Caco-2 (cell line): ENCODE measurements at regions of chr6 and their contacts with region 1.

Region 1: GRCh38 chr6:35452186-35453090 is at the start of gene FANCE:
- DNase-seq: peak; percentile 96 to 98
- H3K4me3 ChIP-seq: peak within 1 kb of the TSS; percentile 85
- H3K4me3 Mint-ChIP-seq: peak within 1 kb of the TSS; percentile 74
- H3K27ac Mint-ChIP-seq: no peak within 1 kb of the TSS
- H3K4me1 ChIP-seq: no peaks in the 10 kb centered on the region
- H3K4me1 Mint-ChIP-seq: peaks cover 7% of the 10 kb centered on the region
- H3K27me3 ChIP-seq: no peaks in the 10 kb centered on the region
- H3K27me3 Mint-ChIP-seq: no peaks in the 10 kb centered on the region
- CTCF ChIP-seq: no peak
- total RNA-seq, gene FANCE: 10.5 and 12.4 TPM in 2 replicates

Region 2: GRCh38 chr6:35297601-35298481 is 154.6 kb before region 1 on chr6 and contains the start of gene DEF6:
- CTCF ChIA-PET with region 1: interaction called, 26 read pairs
- POLR2A ChIA-PET with region 1: no interaction called
- intact Hi-C with region 1: loop called (anchors 1 kb)
- DNase-seq: peak; percentile 83 to 87
- H3K4me3 ChIP-seq: peak within 1 kb of the TSS; percentile 57
- H3K4me3 Mint-ChIP-seq: peak within 1 kb of the TSS; percentile 55
- H3K27ac Mint-ChIP-seq: no peak within 1 kb of the TSS
- H3K4me1 ChIP-seq: peaks cover 5% of the 10 kb centered on the region; the same call in 1 of the 2 replicates
- H3K4me1 Mint-ChIP-seq: no peaks in the 10 kb centered on the region
- H3K27me3 ChIP-seq: no peaks in the 10 kb centered on the region
- H3K27me3 Mint-ChIP-seq: no peaks in the 10 kb centered on the region
- CTCF ChIP-seq: peak; percentile 64 to 85
- total RNA-seq, gene DEF6: 5.6 and 5.7 TPM in 2 replicates

Region 3: DNA sequence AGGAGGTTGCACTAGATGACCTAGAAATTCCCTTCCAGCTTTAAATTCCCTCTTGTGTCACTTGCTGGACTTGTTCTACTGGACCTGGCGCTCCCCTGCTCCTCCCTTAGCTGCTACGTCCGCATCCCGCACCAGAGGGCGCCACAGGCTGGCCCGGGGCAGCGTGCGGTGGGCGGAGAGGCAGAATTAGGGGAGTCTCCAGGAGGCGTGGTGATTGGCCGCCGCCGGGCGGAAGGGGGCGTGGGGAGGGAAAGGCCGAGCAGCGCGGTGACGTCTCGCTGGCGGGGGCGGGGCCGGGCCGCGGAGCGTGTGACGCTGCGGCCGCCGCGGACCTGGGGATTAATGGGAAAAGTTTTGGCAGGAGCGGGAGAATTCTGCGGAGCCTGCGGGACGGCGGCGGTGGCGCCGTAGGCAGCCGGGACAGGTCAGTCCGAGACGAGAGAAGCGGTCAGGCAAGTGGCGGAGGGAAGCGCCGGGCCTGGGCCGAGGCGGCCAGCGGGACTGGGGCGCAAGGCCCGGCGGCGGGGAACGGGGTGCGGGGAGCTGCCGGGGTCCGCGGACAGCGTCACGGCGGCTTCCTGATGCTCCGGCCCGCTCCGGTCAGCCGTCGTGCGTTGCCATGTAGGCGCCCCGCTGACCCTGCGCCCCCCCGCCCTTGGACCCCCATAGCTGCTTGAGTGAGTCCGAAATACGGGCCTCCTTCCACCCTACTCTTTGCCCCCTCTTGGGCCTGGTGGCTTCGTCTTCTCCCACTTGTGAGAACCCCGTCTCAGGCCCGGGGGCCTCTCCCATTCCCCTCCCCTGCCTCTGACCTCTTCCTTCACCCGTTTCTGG is 110.0 kb before region 1 on chr6 and contains the start of gene PPARD:
- CTCF ChIA-PET with region 1: interaction called, 50 read pairs
- POLR2A ChIA-PET with region 1: no interaction called
- intact Hi-C with region 1: loop called (anchors 1 kb)
- DNase-seq: peak; percentile 97 to 99
- H3K4me3 ChIP-seq: peak within 1 kb of the TSS; percentile 84
- H3K4me3 Mint-ChIP-seq: peak within 1 kb of the TSS; percentile 85
- H3K27ac Mint-ChIP-seq: peak within 1 kb of the TSS; percentile 78
- H3K4me1 ChIP-seq: peaks cover 6% of the 10 kb centered on the region
- H3K4me1 Mint-ChIP-seq: no peaks in the 10 kb centered on the region
- H3K27me3 ChIP-seq: no peaks in the 10 kb centered on the region
- H3K27me3 Mint-ChIP-seq: no peaks in the 10 kb centered on the region
- CTCF ChIP-seq: peak; percentile 88 to 97
- total RNA-seq, gene PPARD: 11.3 and 12.0 TPM in 2 replicates

Region 4: DNA sequence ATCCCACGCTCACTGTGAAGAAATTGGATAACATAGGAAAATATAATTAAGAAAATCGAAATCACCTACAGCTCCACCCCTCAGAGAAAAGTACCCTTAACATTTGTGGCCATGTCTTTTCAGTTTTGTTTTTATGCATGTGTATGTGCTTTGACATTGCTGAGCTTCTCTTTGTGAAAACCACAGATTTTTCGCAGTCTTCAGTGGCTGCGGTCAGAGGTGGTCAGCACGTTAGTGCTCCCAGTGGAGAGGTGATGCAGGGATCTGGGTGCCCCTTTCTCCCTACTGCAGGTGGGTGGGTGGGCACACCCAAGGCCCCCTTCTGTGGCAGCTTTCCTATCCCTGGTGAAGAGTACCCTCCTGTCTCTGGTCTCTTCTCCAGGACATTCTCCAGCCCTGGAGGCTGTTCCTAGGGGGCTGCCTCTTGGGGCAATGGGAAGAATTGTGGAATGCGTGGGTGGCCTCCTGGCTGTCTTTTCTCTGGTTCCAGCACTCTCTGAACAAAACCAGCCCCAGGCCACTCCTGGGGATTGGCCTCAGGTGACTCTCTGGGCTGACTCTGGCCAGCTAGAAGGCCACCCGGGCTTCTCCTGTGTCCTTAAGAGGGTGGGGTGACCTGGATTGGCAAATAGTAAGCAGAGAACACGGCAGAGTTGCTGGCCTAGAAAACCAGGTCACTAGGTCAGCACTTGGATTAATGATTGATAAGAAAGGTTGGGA is 50.1 kb before region 1 on chr6:
- CTCF ChIA-PET with region 1: no interaction called
- POLR2A ChIA-PET with region 1: interaction called, 3 read pairs
- intact Hi-C with region 1: loop called (anchors 5 kb)
- DNase-seq: peak; percentile 80 to 82
- H3K4me3 ChIP-seq: no peak overlapping the region
- H3K4me3 Mint-ChIP-seq: no peak overlapping the region
- H3K27ac Mint-ChIP-seq: peak overlapping the region; percentile 18
- H3K4me1 ChIP-seq: peaks cover 20% of the 10 kb centered on the region
- H3K4me1 Mint-ChIP-seq: peaks cover 14% of the 10 kb centered on the region
- H3K27me3 ChIP-seq: no peaks in the 10 kb centered on the region
- H3K27me3 Mint-ChIP-seq: no peaks in the 10 kb centered on the region
- CTCF ChIP-seq: no peak

Region 5: DNA sequence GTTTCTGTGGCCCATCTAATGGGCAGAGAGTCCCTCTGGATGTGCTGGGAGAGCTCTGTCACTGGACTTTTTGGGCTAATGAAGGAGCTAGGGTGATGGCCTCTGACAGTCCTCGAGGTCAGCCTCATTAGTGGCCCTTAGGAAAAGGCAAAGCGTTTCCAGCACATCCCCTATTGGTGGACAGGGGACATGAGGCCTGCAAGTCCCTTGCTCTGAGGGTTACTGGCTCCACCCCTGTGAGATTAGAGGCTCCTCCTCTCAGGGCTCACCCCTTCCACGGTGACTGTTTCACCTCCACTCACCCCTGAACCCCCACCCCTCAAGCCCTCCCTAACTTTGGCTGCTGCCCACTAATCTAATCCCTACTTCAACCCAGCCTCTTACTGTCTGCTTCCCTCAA is 13.1 kb before region 1 on chr6:
- CTCF ChIA-PET with region 1: no interaction called
- POLR2A ChIA-PET with region 1: no interaction called
- intact Hi-C with region 1: no loop called
- DNase-seq: no peak
- H3K4me3 ChIP-seq: no peak overlapping the region
- H3K4me3 Mint-ChIP-seq: no peak overlapping the region
- H3K27ac Mint-ChIP-seq: no peak overlapping the region
- H3K4me1 ChIP-seq: no peaks in the 10 kb centered on the region
- H3K4me1 Mint-ChIP-seq: no peaks in the 10 kb centered on the region
- H3K27me3 ChIP-seq: no peaks in the 10 kb centered on the region
- H3K27me3 Mint-ChIP-seq: no peaks in the 10 kb centered on the region
- CTCF ChIP-seq: no peak

Region 6: GRCh38 chr6:35468181-35468979 is 15.9 kb after region 1 on chr6 and contains the start of gene RPL10A:
- CTCF ChIA-PET with region 1: interaction called, 4 read pairs
- POLR2A ChIA-PET with region 1: interaction called, 6 read pairs
- intact Hi-C with region 1: loop called (anchors 1 kb)
- DNase-seq: peak; percentile 94 to 95
- H3K4me3 ChIP-seq: peak within 1 kb of the TSS; percentile 86
- H3K4me3 Mint-ChIP-seq: peak within 1 kb of the TSS; percentile 86
- H3K27ac Mint-ChIP-seq: peak within 1 kb of the TSS; percentile 88
- H3K4me1 ChIP-seq: peaks cover 30% of the 10 kb centered on the region
- H3K4me1 Mint-ChIP-seq: peaks cover 20% of the 10 kb centered on the region
- H3K27me3 ChIP-seq: no peaks in the 10 kb centered on the region
- H3K27me3 Mint-ChIP-seq: no peaks in the 10 kb centered on the region
- CTCF ChIP-seq: peak; percentile 94 to 96
- total RNA-seq, gene RPL10A: 1,082 and 1,106 TPM in 2 replicates